ENCODE measurements at regions of chr2 and their contacts with region 1.

Region 1: DNA sequence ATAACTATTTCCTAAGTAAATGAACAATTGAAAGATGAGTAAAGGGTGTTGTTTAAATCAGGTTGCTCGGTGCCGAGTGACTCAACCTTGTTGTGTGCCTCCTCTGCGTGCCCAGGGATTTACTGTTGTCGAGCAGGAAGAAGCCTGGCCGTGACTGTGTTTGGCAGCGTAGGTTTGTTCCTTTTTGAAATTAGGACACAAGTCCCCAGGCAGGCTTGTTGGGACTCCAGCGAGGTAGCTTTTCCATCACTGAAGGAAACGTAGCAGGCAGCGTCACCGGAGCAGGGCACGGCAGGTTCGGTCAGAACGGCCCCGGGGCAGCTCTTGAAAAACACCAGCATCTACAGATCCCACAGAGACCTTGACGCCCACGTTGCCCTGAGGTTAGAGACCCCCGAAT is 48.6 kb downstream of the TMEM18 start:
- DNase-seq: no peak
- H3K4me3 ChIP-seq: no peak overlapping the region
- H3K4me3 Mint-ChIP-seq: no peak overlapping the region
- H3K27ac Mint-ChIP-seq: no peak overlapping the region
- H3K4me1 ChIP-seq: no peaks in the 10 kb centered on the region
- H3K4me1 Mint-ChIP-seq: no peaks in the 10 kb centered on the region
- H3K27me3 ChIP-seq: no peaks in the 10 kb centered on the region; the same call in 1 of the 2 replicates
- H3K27me3 Mint-ChIP-seq: peaks cover 25% of the 10 kb centered on the region
- CTCF ChIP-seq: no peak

Region 2: DNA sequence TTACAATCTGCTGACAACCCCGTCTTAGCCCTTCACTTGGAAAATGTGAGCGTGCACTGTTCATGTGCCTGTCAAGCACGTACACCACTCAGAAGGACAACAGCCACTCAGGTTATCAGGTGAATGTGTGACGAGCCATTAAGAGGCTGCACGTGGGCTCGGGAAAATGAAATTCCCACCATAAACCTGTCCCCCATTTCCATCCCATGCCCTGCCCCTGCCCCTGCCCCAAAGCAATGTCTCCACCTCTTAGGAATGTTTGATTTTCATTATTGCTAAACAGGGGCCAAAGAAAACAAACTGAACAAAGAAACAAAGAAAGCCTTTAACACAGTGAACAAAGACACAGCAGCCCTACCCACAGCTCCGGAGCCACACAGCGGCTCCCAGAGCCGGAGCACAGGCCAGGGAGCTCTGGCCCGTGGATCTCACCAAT is 42.0 kb before region 1 on chr2:
- CTCF ChIA-PET with region 1: no interaction called
- POLR2A ChIA-PET with region 1: no interaction called
- intact Hi-C with region 1: loop called (anchors 1 kb)
- DNase-seq: no peak
- H3K4me3 ChIP-seq: no peak overlapping the region
- H3K4me3 Mint-ChIP-seq: no peak overlapping the region
- H3K27ac Mint-ChIP-seq: no peak overlapping the region
- H3K4me1 ChIP-seq: no peaks in the 10 kb centered on the region
- H3K4me1 Mint-ChIP-seq: no peaks in the 10 kb centered on the region
- H3K27me3 ChIP-seq: no peaks in the 10 kb centered on the region; the same call in 1 of the 2 replicates
- H3K27me3 Mint-ChIP-seq: peaks cover 2% of the 10 kb centered on the region
- CTCF ChIP-seq: no peak

Region 3: DNA sequence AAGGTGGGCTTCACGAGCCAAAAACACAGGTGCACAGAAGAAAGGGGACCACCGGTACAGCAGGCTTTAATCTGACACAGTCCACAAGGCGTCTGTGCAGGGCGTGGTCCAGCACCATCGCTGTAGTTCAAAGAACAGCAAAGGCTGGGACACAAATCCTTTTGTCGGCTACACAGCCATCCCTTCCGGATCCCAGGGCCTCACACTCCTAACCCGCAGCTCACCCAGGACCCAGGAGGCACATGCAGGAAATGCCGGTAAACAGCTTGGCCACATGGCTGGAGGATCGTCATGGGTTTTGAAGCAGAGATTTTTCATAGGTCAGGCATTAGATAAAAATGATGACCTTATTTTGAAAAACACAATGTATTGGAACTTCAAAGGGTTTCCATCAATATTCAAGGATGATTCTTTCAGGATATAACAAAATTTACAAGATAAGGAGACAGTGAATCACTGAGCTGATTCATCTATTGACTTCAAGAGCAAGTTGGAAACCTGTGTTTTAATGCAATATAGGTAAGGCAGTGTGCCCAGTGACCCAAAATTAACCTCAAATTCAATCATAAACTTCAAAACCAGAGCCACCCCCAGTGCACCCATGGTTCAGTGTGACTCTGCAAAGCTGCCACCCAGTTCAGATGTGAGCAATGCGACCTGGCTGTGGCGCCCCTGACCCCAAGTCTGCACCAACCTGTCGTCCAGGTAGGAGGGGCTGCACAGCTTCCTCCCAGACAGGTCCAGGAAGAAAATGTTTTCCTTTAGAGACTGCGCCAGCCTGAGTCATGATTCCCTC is 25.9 kb before region 1 on chr2:
- CTCF ChIA-PET with region 1: no interaction called
- POLR2A ChIA-PET with region 1: no interaction called
- intact Hi-C with region 1: no loop called
- DNase-seq: no peak
- H3K4me3 ChIP-seq: no peak overlapping the region
- H3K4me3 Mint-ChIP-seq: no peak overlapping the region
- H3K27ac Mint-ChIP-seq: no peak overlapping the region
- H3K4me1 ChIP-seq: no peaks in the 10 kb centered on the region
- H3K4me1 Mint-ChIP-seq: no peaks in the 10 kb centered on the region
- H3K27me3 ChIP-seq: no peaks in the 10 kb centered on the region
- H3K27me3 Mint-ChIP-seq: no peaks in the 10 kb centered on the region
- CTCF ChIP-seq: no peak

Measured in Caco-2 (cell line).